Caco-2 (cell line): ENCODE measurements at regions of chr9 and their contacts with region 1.

Region 1: GRCh38 chr9:503881-504852 is 289.5 kb downstream of the DOCK8 start:
- DNase-seq: peak; percentile 83 to 92
- H3K4me3 ChIP-seq: peak within 1 kb of the TSS; percentile 90
- H3K4me3 Mint-ChIP-seq: peak within 1 kb of the TSS; percentile 84
- H3K27ac Mint-ChIP-seq: peak within 1 kb of the TSS; percentile 86
- H3K4me1 ChIP-seq: peaks cover 21% of the 10 kb centered on the region
- H3K4me1 Mint-ChIP-seq: peaks cover 15% of the 10 kb centered on the region
- H3K27me3 ChIP-seq: no peaks in the 10 kb centered on the region
- H3K27me3 Mint-ChIP-seq: no peaks in the 10 kb centered on the region
- CTCF ChIP-seq: peak; percentile 22 to 28

Region 2: GRCh38 chr9:406886-407654 is 97.1 kb before region 1 on chr9:
- CTCF ChIA-PET with region 1: interaction called, 8 read pairs
- POLR2A ChIA-PET with region 1: no interaction called
- intact Hi-C with region 1: loop called (anchors 1 kb)
- DNase-seq: peak in 1 of 2 experiments; percentile 20
- H3K4me3 ChIP-seq: no peak overlapping the region
- H3K4me3 Mint-ChIP-seq: no peak overlapping the region
- H3K27ac Mint-ChIP-seq: no peak overlapping the region
- H3K4me1 ChIP-seq: no peaks in the 10 kb centered on the region
- H3K4me1 Mint-ChIP-seq: peaks cover 7% of the 10 kb centered on the region
- H3K27me3 ChIP-seq: no peaks in the 10 kb centered on the region
- H3K27me3 Mint-ChIP-seq: no peaks in the 10 kb centered on the region
- CTCF ChIP-seq: peak in 1 of 2 experiments; percentile 19

Region 3: DNA sequence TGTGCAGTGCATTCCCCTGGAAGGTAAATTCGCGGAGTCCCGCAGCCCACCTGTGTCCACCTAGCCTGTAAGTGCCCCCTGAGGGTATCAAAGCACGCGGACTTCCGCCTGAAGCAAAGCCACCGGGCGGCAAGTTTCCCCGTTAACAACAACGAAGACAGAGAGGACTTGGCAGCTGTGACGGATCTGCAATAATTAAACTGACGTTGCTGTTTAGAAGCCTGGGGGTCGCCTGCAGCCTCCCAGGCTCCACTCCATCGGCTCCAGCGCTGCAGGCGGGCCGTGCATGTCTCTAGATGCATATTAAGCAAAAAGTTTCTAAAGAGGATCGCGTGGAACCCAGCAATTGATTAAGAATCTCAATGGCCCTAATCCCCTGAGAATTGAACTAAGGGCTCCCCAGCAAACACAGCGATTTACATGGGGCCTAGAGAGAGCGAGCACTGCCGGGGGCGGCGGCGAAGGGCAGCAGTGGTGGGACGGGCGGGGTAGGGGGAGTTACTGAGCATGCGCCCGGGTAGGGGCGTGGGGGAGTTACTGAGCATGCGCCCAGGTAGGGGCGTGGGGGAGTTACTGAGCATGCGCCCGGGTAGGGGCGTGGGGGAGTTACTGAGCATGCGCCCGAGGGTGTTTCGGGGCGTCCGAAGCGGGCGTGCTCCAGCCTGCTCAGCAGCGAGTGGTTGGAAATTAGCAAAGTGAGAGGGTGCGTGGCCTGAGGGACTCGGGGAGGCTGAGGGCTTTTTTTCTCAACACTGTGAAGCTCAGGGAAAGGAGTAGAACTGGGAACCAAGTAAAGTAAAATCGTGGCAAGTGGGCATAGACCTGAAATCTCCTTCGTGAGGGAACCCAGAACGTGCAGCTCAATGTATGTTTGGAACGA is 34.3 kb before region 1 on chr9:
- CTCF ChIA-PET with region 1: no interaction called
- POLR2A ChIA-PET with region 1: interaction called, 3 read pairs
- intact Hi-C with region 1: loop called (anchors 1 kb)
- DNase-seq: peak; percentile 85
- H3K4me3 ChIP-seq: peak overlapping the region; percentile 61
- H3K4me3 Mint-ChIP-seq: peak overlapping the region; percentile 94
- H3K27ac Mint-ChIP-seq: peak overlapping the region; percentile 95
- H3K4me1 ChIP-seq: peaks cover 28% of the 10 kb centered on the region
- H3K4me1 Mint-ChIP-seq: peaks cover 13% of the 10 kb centered on the region
- H3K27me3 ChIP-seq: no peaks in the 10 kb centered on the region
- H3K27me3 Mint-ChIP-seq: no peaks in the 10 kb centered on the region
- CTCF ChIP-seq: no peak

Region 4: GRCh38 chr9:477193-477592 is 27.0 kb before region 1 on chr9:
- CTCF ChIA-PET with region 1: interaction called, 3 read pairs
- POLR2A ChIA-PET with region 1: interaction called, 12 read pairs
- intact Hi-C with region 1: no loop called
- DNase-seq: no peak
- H3K4me3 ChIP-seq: no peak overlapping the region
- H3K4me3 Mint-ChIP-seq: peak overlapping the region; percentile 25
- H3K27ac Mint-ChIP-seq: peak overlapping the region; percentile 95
- H3K4me1 ChIP-seq: peaks cover 72% of the 10 kb centered on the region
- H3K4me1 Mint-ChIP-seq: peaks cover 52% of the 10 kb centered on the region
- H3K27me3 ChIP-seq: no peaks in the 10 kb centered on the region
- H3K27me3 Mint-ChIP-seq: no peaks in the 10 kb centered on the region
- CTCF ChIP-seq: no peak

Region 5: DNA sequence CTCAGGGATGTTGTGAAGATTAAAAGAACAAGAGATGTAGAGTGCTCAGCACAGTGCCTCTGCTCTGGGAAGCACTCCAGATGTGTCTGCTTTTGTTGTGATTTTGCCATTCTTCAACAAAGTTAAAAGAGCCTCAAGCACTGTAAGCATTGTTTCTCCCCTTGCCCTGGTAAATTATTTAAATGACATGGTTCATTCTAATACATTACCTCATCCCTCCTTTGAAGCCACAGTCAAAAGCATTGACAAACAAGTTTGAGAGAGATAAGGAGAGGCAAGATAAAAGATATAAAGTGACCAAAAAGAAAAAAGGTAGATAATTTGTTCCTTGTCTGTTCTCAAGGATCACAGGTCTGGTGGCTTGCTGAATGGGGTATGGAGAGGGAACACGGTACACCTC is 19.8 kb before region 1 on chr9:
- CTCF ChIA-PET with region 1: interaction called, 3 read pairs
- POLR2A ChIA-PET with region 1: no interaction called
- intact Hi-C with region 1: loop called (anchors 1 kb)
- DNase-seq: peak in 1 of 2 experiments; percentile 34
- H3K4me3 ChIP-seq: no peak overlapping the region
- H3K4me3 Mint-ChIP-seq: peak overlapping the region; percentile 26
- H3K27ac Mint-ChIP-seq: peak overlapping the region; percentile 51
- H3K4me1 ChIP-seq: peaks cover 91% of the 10 kb centered on the region
- H3K4me1 Mint-ChIP-seq: peaks cover 30% of the 10 kb centered on the region
- H3K27me3 ChIP-seq: no peaks in the 10 kb centered on the region
- H3K27me3 Mint-ChIP-seq: no peaks in the 10 kb centered on the region
- CTCF ChIP-seq: no peak

Region 6: DNA sequence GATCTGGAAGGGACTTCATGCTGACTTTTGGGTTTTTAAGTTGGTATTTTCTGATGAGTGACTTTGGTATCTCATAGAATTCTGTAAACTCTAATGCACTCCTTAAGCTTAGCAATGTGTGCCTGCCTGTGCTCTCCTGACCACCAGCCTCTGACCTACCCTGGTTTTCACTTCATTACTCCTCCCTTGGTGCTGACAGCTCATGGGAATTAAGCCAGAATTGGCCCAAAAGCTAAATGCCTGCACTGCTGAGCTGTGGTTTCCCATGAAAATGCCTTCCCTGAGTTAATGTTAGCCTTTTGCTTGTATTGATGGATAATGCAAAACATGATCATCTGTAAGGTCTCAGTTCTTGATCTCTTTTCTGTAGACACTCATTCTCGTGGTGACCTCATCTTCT is 18.5 kb after region 1 on chr9:
- CTCF ChIA-PET with region 1: no interaction called
- POLR2A ChIA-PET with region 1: no interaction called
- intact Hi-C with region 1: no loop called
- DNase-seq: no peak
- H3K4me3 ChIP-seq: no peak overlapping the region
- H3K4me3 Mint-ChIP-seq: no peak overlapping the region
- H3K27ac Mint-ChIP-seq: no peak overlapping the region
- H3K4me1 ChIP-seq: peaks cover 20% of the 10 kb centered on the region
- H3K4me1 Mint-ChIP-seq: peaks cover 31% of the 10 kb centered on the region
- H3K27me3 ChIP-seq: no peaks in the 10 kb centered on the region
- H3K27me3 Mint-ChIP-seq: no peaks in the 10 kb centered on the region
- CTCF ChIP-seq: no peak

Region 7: GRCh38 chr9:1470001-1470804 is 966.0 kb after region 1 on chr9:
- CTCF ChIA-PET with region 1: no interaction called
- POLR2A ChIA-PET with region 1: no interaction called
- intact Hi-C with region 1: no loop called
- DNase-seq: no peak
- H3K4me3 ChIP-seq: no peak overlapping the region
- H3K4me3 Mint-ChIP-seq: no peak overlapping the region
- H3K27ac Mint-ChIP-seq: no peak overlapping the region
- H3K4me1 ChIP-seq: no peaks in the 10 kb centered on the region
- H3K4me1 Mint-ChIP-seq: no peaks in the 10 kb centered on the region
- H3K27me3 ChIP-seq: no peaks in the 10 kb centered on the region
- H3K27me3 Mint-ChIP-seq: peaks cover 4% of the 10 kb centered on the region
- CTCF ChIP-seq: no peak